ENCODE measurements at regions of chr19 and their contacts with region 1.

Region 1: GRCh38 chr19:16591803-16592556 is 19.8 kb upstream of the SLC35E1 start:
- DNase-seq: no peak
- ATAC-seq: no peak
- H3K4me3 Mint-ChIP-seq: no peak overlapping the region
- H3K27ac Mint-ChIP-seq: no peak overlapping the region
- H3K4me1 Mint-ChIP-seq: peaks cover 82% of the 10 kb centered on the region
- H3K27me3 Mint-ChIP-seq: no peaks in the 10 kb centered on the region

Region 2: DNA sequence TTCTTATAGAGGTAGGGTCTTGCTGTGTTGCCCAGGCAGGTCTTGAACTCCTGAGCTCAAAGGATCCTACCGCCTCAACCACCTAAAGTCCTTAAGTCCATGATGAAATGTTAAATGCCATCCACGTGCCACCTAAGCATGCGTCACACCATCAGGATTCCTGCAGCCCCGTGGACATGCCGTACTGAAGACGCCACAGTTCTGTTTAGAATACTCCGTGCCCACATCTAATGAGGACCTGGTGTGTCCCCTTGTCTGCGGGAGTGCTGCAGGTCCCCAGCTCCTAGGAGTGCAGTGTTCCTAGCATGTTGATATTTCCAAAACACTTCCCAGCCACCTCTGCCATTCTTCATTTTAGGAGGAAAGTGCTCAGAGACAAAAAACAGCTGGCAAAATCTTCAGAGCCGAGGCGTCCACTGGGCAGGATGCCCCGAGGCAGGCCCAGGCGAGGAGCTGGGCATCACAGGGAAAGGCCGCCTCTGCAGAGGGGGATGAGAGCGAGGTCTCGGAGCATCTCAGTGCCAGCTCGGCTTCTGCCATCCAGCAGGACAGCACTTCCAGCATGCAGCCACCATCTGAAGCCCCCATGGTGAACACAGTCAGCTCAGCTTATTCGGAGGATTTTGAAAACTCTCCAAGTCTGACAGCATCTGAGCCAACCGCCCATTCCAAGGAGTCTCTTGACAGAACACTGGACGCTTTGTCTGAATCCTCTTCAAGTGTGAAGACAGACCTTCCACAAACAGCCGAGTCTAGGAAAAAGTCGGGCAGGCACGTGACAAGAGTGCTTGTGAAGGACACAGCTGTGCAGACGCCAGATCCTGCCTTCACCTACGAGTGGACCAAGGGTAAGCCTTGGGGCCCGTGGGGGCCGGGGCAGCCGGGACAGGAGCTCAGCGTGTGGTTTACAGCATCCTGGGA is 82.6 kb before region 1 on chr19:
- CTCF ChIA-PET with region 1: no interaction called
- POLR2A ChIA-PET with region 1: no interaction called
- intact Hi-C with region 1: no loop called
- DNase-seq: no peak
- ATAC-seq: no peak
- H3K4me3 Mint-ChIP-seq: no peak overlapping the region
- H3K27ac Mint-ChIP-seq: no peak overlapping the region
- H3K4me1 Mint-ChIP-seq: no peaks in the 10 kb centered on the region
- H3K27me3 Mint-ChIP-seq: no peaks in the 10 kb centered on the region

Region 3: DNA sequence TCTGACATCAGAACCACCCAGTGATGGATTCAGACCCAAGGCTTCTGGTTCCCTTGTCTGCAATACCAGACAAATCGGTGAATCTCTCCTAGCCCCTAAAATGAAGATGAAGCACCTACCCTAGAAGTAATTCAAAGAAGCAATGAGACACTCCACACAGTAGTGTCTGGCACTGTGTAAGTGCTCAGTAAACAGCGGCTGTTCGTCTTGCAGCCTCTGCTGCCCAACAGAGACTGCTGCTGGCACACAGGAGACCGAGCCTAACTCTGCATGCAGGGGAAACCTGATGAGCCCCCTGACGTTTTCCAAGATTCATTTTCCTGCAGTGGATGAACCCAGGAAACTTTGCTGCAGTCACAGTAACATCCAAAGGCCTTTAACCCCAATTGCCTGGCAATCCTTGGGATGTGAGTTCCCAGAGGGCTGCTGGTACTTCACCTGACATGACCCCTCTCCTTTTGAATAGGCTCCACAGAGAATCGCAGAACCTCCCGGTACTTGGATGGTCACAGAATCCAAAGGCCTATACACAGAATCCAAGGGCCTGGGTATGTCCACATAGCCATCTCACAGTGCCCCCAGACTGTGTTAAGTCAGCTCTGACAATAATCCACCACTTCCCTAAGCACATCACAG is 29.3 kb after region 1 on chr19:
- CTCF ChIA-PET with region 1: interaction called, 4 read pairs
- POLR2A ChIA-PET with region 1: interaction called, 14 read pairs
- intact Hi-C with region 1: loop called in 1 of 2 experiments (anchors 1 kb)
- DNase-seq: no peak
- ATAC-seq: no peak
- H3K4me3 Mint-ChIP-seq: no peak overlapping the region
- H3K27ac Mint-ChIP-seq: no peak overlapping the region
- H3K4me1 Mint-ChIP-seq: peaks cover 72% of the 10 kb centered on the region
- H3K27me3 Mint-ChIP-seq: no peaks in the 10 kb centered on the region

Region 4: GRCh38 chr19:16714702-16715287 is 122.8 kb after region 1 on chr19:
- CTCF ChIA-PET with region 1: no interaction called
- POLR2A ChIA-PET with region 1: no interaction called
- intact Hi-C with region 1: no loop called
- DNase-seq: peak; percentile 75
- ATAC-seq: peak; percentile 47
- H3K4me3 Mint-ChIP-seq: no peak overlapping the region
- H3K27ac Mint-ChIP-seq: no peak overlapping the region
- H3K4me1 Mint-ChIP-seq: no peaks in the 10 kb centered on the region
- H3K27me3 Mint-ChIP-seq: peaks cover 2% of the 10 kb centered on the region

Measured in activated CD4-positive, alpha-beta T cell treated with anti-CD3 and anti-CD28 coated beads for 36 hours (primary cell).